Dendritic cell treated with granulocyte-macrophage colony-stimulating factor and Interleukin-4, amounts not matched to agents 40 ng/mL and 50 ng/mL, for 4 days (primary cell): ENCODE measurements at regions of chr1 and their contacts with region 1.

Region 1: DNA sequence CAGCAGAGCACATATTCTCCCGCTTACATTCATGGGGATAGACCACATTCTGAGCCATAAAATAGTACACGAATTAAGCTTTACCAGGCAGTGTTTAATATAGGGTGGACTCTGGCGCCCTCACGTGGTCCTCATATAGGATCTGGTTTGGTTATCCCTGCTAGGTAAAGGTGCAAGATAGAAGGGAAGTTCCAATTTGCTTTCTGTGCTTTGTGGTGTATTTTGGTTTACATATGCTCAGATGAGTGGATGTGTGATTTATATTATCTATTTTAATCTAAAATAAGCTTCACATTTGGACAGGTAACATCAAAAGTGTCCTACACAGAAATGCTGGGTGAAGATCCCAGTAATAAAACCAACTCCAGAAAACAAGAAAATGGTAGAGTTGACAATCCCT is 3.6 kb downstream of the CR1 start:
- H3K4me3 Mint-ChIP-seq: no peak overlapping the region
- H3K27ac Mint-ChIP-seq: no peak overlapping the region
- H3K4me1 Mint-ChIP-seq: peaks cover 34% of the 10 kb centered on the region
- H3K27me3 Mint-ChIP-seq: no peaks in the 10 kb centered on the region

Region 2: DNA sequence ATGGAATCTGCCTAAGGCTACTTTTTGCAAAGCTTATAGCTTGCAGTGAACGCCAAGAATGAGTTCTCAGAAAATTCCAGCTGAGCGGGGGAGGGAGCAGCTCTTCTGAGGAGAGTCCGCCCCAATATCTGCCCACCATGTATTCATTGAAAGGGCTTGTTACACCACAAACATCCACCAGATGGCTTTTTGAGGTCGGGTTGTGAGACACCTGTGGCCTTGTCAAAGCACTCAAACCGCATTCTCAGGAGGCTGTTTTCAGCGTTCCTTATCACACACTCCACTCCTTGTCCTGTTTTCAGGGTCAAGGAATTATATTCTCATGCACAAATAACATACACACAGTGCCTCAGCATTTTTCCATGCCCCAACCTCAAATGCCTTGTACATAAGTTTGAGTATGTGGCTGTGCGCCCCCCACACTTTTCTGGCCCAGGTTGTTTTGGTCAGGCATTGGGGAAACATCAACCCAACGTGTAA is 414.8 kb before region 1 on chr1:
- intact Hi-C with region 1: loop called (anchors 2 kb)
- H3K4me3 Mint-ChIP-seq: no peak overlapping the region
- H3K27ac Mint-ChIP-seq: peak overlapping the region; percentile 15
- H3K4me1 Mint-ChIP-seq: peaks cover 24% of the 10 kb centered on the region
- H3K27me3 Mint-ChIP-seq: peaks cover 10% of the 10 kb centered on the region

Region 3: DNA sequence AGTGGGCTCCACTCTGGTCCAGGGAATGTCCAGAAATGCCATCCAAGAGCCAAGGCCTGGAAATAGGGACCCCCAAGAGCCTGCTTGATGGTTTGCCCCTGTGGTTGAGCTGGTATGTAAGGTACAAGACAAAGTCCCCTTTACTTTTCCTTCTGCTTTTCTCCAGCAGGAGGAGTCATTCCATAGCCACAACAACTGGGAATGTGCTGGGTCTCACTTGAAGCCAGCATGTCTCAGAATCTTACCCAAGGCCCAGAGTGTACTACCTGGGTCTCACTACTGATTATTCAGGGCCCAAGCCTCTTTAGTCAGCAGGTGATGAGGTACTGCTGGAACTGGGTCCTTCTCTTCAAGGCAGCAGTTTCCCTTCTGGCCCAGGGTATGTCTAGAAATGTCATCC is 240.2 kb before region 1 on chr1:
- intact Hi-C with region 1: loop called (anchors 2 kb)
- H3K4me3 Mint-ChIP-seq: no peak overlapping the region
- H3K27ac Mint-ChIP-seq: no peak overlapping the region
- H3K4me1 Mint-ChIP-seq: peaks cover 17% of the 10 kb centered on the region
- H3K27me3 Mint-ChIP-seq: peaks cover 1% of the 10 kb centered on the region

Region 4: GRCh38 chr1:207404849-207405525 is 94.6 kb before region 1 on chr1:
- intact Hi-C with region 1: loop called (anchors 2 kb)
- H3K4me3 Mint-ChIP-seq: no peak overlapping the region
- H3K27ac Mint-ChIP-seq: no peak overlapping the region
- H3K4me1 Mint-ChIP-seq: peaks cover 26% of the 10 kb centered on the region
- H3K27me3 Mint-ChIP-seq: no peaks in the 10 kb centered on the region